ENCODE measurements at regions of chr1 and their contacts with region 1.

Region 1: GRCh38 chr1:204363335-204364124 is 3.8 kb upstream of the PLEKHA6 start:
- DNase-seq: peak; percentile 74
- ATAC-seq: peak; percentile 73 to 76

Region 2: GRCh38 chr1:203861379-203862184 is 501.9 kb before region 1 on chr1 and contains the start of gene SNRPE:
- intact Hi-C with region 1: loop called in 1 of 2 experiments (anchors 10 kb)
- DNase-seq: peak; percentile 95
- ATAC-seq: peak; percentile 98 to 99
- total RNA-seq, gene SNRPE: 62.5 to 81.5 TPM

Region 3: GRCh38 chr1:204162231-204163074 is 201.1 kb before region 1 on chr1:
- intact Hi-C with region 1: loop called (anchors 2 to 5 kb)
- DNase-seq: peak; percentile 81
- ATAC-seq: peak; percentile 93

Region 4: GRCh38 chr1:204213668-204214662 is 149.6 kb before region 1 on chr1 and contains the start of gene GOLT1A:
- intact Hi-C with region 1: loop called (anchors 5 kb)
- DNase-seq: peak; percentile 64
- ATAC-seq: peak; percentile 77 to 81
- total RNA-seq, gene GOLT1A: not detected

Region 5: DNA sequence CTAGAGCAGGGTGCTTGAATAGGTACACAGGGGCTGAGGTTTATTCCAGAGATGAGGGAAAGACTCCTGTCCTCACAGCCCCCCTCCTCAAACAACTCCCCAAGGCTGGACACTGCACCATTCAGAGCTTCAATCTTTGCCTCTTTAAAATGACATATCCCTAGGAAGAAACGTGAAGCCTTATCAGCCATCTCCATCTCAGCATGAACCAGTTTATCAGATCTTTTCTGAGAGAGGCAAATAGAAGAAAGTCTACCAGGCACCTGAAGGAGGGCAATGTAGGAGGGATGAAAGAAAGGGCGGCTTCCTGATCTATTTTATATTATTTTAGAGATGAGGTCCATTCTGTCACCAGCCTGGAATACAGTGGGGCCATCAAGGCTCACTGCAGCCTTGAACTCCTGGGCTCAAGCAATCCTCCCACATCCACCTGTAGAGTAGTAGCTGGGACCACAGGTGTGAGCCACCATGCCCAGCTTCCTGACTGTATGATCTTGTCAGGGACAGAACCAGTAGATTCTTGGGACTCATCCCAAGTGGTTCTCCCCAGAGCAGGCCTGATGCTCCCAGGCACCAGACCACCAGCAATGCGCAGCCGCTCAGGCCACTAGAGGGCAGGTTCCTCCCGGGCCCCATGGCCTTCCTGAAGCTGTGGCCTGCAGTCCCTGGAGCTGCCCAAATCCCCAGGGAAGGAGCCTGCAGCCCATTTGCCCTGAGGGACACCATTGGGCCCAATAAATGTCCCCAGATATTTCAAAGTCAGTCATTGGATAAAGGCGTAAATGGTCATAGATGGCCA is 105.4 kb before region 1 on chr1:
- intact Hi-C with region 1: loop called (anchors 5 to 10 kb)
- DNase-seq: peak; percentile 66
- ATAC-seq: peak; percentile 51 to 65

Measured in left cardiac atrium (tissue), 4 donors.